GM18951 (cell line): ENCODE measurements at regions of chr4 and their contacts with region 1.

Region 1: DNA sequence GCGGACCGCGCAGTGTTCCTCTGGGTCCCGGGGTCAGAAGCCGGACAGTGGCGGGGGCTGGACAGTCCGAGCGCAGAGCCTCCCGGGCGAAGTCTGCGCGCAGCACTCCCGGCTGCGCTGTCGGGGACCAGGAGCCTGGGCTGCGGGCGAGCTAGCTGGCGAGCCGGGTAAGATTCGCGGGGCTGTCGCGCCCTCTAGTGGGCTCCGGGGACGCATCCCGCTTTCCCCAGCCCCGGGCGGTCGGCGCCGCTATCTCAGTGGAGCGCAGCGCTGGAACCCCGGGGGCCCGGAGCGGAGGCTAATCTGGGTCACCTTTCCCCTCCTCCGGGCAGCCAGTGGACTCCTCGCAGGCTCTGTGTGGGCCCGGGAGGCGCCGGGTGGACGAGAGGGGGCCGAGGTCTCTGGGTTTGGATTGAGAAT is 4.2 kb downstream of the PDGFRA start:
- POLR2A ChIP-seq: no peak

Region 2: DNA sequence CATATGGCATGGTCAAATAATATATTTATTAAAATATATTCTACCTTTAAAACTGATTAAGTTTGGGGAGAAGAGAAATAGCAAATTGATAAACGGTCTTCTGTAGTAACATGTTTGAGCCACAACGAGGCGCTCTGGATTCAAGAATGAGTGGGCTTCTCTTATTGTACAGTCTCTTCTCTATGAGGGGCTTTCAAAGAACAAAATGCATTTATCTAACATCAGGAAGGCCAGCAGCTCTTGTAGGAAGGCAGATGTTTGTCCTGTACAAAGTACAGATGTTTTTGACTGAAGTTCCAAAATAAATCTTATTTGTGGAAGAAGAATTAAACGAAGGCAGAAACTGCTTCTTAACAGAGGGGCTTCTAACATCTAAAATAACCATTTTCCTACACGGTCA is 1217.6 kb before region 1 on chr4:
- in situ Hi-C with region 1: loop called (anchors 25 kb)
- POLR2A ChIP-seq: no peak

Region 3: DNA sequence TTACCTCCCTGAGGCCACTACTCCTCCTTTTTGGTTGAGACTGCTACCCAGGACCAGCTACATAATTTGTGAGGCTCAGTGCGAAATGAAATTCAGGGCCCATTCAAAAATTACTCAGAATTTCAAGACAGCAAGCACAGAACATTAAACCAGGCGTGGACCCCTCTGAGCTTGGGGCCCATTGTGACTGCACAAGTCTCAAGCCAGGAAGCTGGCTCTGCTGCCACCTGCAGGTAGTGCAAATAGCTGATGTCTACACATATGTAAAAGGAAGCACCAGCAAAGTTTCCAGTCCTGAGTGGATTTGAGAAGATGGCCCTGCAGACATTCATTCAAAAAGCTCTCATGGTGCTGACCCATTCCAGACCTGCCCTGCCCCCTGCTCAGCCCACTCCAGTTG is 428.6 kb before region 1 on chr4:
- in situ Hi-C with region 1: no loop called
- POLR2A ChIP-seq: no peak